Mammary epithelial cell (primary cell): ENCODE measurements at regions of chr1 and their contacts with region 1.

Region 1: GRCh38 chr1:22641906-22642636 is 1.4 kb upstream of the C1QC start:
- DNase-seq: peak; percentile 19
- H3K4me3 ChIP-seq: no peak overlapping the region
- H3K27ac ChIP-seq: no peak overlapping the region
- H3K4me1 ChIP-seq: no peaks in the 10 kb centered on the region
- H3K27me3 ChIP-seq: no peaks in the 10 kb centered on the region
- CTCF ChIP-seq: peak; percentile 56 to 93

Region 2: GRCh38 chr1:22131875-22132486 is 510.1 kb before region 1 on chr1:
- CTCF ChIA-PET with region 1: no interaction called
- dilution Hi-C with region 1: no loop called
- in situ Hi-C with region 1: no loop called
- intact Hi-C with region 1: loop called (anchors 5 kb)
- DNase-seq: peak; percentile 26
- H3K4me3 ChIP-seq: no peak overlapping the region
- H3K27ac ChIP-seq: no peak overlapping the region
- H3K4me1 ChIP-seq: peaks cover 16% of the 10 kb centered on the region
- H3K27me3 ChIP-seq: no peaks in the 10 kb centered on the region
- CTCF ChIP-seq: peak; percentile 82 to 90

Region 3: DNA sequence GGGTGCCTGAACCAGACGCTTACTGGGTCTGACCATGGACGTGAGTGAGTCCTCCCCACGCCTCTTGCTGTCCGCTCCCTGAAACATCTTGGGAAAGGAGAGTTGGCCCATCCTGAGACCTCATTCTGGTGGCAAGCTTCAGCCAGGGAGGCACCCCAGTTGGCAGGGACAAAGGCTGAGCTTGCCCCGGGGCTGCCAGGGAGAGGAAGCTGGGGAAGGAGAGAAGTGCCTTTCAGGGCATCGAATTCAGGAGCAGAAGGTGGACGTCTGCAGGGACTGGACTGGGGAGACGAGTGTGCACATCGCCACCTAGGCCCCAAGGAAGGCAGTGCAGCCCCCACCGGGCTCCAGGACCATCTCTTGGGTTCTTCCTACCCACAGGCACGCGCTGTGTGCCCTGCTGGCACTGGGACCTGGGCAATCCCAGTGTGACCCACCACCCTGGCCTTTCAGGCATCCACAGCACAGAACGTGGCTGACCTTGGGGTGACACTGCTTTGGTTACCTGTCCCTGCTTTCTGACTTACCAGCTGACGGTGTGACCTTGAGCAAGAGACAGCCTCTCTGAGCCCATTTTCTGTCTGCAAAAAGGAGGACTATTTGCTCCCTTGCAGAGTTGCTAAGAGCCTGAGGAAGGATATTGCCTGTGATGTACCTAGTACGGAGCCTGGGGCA is 366.2 kb before region 1 on chr1:
- CTCF ChIA-PET with region 1: no interaction called
- dilution Hi-C with region 1: no loop called
- in situ Hi-C with region 1: no loop called
- intact Hi-C with region 1: loop called (anchors 10 kb)
- DNase-seq: peak; percentile 39
- H3K4me3 ChIP-seq: no peak overlapping the region
- H3K27ac ChIP-seq: no peak overlapping the region
- H3K4me1 ChIP-seq: peaks cover 8% of the 10 kb centered on the region
- H3K27me3 ChIP-seq: no peaks in the 10 kb centered on the region
- CTCF ChIP-seq: peak; percentile 76 to 93

Region 4: GRCh38 chr1:22426781-22427180 is 215.3 kb before region 1 on chr1:
- CTCF ChIA-PET with region 1: no interaction called
- dilution Hi-C with region 1: no loop called
- in situ Hi-C with region 1: loop called in 1 of 2 experiments (anchors 5 kb)
- intact Hi-C with region 1: no loop called
- DNase-seq: no peak
- H3K4me3 ChIP-seq: no peak overlapping the region
- H3K27ac ChIP-seq: no peak overlapping the region
- H3K4me1 ChIP-seq: no peaks in the 10 kb centered on the region
- H3K27me3 ChIP-seq: no peaks in the 10 kb centered on the region
- CTCF ChIP-seq: no peak

Region 5: DNA sequence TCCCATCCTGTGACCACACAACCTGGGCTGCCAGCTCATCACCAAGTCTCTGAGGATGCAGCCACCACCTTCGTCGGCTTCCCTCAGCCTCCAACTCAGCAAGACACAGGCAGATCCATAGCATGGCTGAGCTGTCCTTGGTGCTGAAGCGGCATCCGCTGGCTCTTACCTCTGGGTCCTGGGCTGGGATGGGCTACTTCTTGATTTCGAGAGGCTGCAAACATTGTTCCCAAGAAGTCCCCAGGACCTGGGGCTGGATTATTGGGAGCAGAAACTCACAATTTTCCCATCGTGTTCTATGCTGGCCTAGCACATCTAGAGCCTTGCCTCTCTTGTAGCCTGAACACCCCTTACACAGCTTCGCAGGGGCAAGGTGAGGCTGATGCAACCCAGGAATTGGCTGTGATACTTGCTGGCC is 30.5 kb before region 1 on chr1:
- CTCF ChIA-PET with region 1: no interaction called
- dilution Hi-C with region 1: no loop called
- in situ Hi-C with region 1: no loop called
- intact Hi-C with region 1: no loop called
- DNase-seq: peak; percentile 43
- H3K4me3 ChIP-seq: no peak overlapping the region
- H3K27ac ChIP-seq: no peak overlapping the region
- H3K4me1 ChIP-seq: no peaks in the 10 kb centered on the region
- H3K27me3 ChIP-seq: peaks cover 2% of the 10 kb centered on the region
- CTCF ChIP-seq: no peak